AG04449 (cell line): ENCODE measurements at regions of chr1 and their contacts with region 1.

Region 1: GRCh38 chr1:156212833-156213643 is at the start of gene PMF1:
- DNase-seq: peak; percentile 75
- H3K4me3 ChIP-seq: peak within 1 kb of the TSS; percentile 96
- CTCF ChIP-seq: no peak

Region 2: DNA sequence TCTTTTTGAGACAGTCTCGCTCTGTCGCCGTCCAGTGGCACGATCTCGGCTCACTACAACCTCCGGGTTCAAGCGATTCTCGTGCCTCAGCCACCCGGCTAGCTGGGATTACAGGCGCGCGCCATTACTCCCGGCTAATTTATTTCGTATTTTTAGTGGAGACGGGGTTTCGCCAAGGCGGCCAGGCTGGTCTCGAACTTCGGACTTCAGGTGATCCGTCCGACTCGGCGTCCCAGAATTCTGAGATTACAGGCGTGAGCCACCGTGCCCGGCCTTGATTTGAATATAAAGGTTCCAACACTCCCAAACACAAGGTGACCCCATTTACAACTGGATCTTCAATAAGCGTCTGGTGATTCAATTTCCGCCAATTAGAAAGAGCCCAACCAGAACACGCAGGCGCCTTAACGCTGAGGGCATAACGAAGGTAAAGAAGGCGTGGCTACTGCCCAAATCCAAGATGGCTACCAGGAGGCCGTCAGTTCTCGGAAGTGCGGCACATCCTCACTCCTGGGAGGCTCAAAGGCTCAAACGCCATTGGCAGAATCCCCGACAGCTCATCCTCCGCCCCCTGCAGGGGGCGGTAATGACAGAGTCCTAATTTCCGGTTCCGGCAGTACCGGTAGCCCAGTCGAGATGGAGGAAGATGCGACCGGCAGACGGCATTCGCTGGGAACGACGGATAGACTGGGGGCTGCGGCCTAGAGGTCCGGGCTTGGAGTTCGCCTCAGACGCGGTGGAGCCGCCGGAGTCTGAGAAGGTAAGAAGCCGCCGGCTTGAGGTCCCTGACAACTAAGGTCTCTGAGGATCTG is 19.3 kb before region 1 on chr1 and contains the start of gene SLC25A44:
- CTCF ChIA-PET with region 1: interaction called, 16 read pairs
- POLR2A ChIA-PET with region 1: interaction called, 19 read pairs
- DNase-seq: peak; percentile 94
- H3K4me3 ChIP-seq: peak within 1 kb of the TSS; percentile 98
- CTCF ChIP-seq: peak; percentile 42